Gastrocnemius medialis (tissue), 4 donors: ENCODE measurements at regions of chr19 and their contacts with region 1.

Region 1: GRCh38 chr19:35495107-35496064 is 5.1 kb upstream of the KRTDAP start:
- DNase-seq: peak; percentile 11 to 24
- ATAC-seq: peak; percentile 73 to 82
- H3K4me3 ChIP-seq: peak overlapping the region in 1 of 4 donors; percentile 7
- H3K27ac ChIP-seq: no peak overlapping the region
- H3K4me1 ChIP-seq: peaks cover 0 to 3% of the 10 kb centered on the region in 2 donors
- H3K27me3 ChIP-seq: peaks cover 0 to 5% (median 0%) of the 10 kb centered on the region in 3 donors
- CTCF ChIP-seq: peak; percentile 75 to 95 (median 83)
- POLR2A ChIP-seq: no peak

Region 2: DNA sequence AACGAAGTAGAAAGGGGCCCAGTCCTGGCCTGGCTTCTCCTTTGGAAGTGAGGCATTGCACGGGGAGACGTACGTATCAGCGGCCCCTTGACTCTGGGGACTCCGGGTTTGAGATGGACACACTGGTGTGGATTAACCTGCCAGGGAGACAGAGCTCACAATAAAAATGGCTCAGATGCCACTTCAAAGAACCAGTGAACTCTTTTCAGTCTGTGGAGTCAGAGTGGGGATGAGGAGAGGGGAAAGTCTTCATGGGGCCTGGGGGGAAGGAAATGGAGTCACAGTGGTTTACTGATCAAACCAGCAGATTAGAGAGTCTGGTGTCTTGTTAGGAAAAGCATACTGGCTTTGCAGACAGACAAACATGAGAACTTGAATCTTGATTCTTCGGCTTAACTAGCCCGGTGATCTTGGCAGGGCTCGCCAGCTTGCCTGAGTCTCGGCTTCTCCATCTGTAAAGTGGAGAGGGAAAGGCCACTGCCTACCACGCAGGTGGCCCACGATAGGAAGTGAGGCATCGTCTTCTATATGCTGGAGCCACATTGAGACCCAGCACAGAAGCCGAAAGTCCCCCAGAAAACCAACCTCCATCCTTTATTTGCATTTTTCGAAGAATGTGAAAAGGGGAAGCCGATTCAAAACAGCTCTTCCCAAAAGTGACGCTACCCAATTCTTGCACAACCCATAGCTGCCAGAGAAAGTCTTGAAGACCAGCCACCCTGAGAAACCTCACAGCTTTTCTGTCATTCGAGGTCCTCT is 148.0 kb before region 1 on chr19 and contains the start of gene FFAR1:
- in situ Hi-C with region 1: loop called in 1 of 4 experiments (anchors 10 kb)
- intact Hi-C with region 1: loop called (anchors 10 kb)
- DNase-seq: no peak
- ATAC-seq: no peak
- H3K4me3 ChIP-seq: no peak within 1 kb of the TSS
- H3K27ac ChIP-seq: no peak within 1 kb of the TSS
- H3K4me1 ChIP-seq: no peaks in the 10 kb centered on the region
- H3K27me3 ChIP-seq: no peaks in the 10 kb centered on the region
- CTCF ChIP-seq: no peak
- POLR2A ChIP-seq: no peak
- total RNA-seq, gene FFAR1: not detected